ENCODE measurements at regions of chr15 and their contacts with region 1.

Region 1: GRCh38 chr15:29538044-29538443 is 268.4 kb upstream of the NSMCE3 start:
- DNase-seq: no peak
- H3K4me3 ChIP-seq: no peak overlapping the region
- CTCF ChIP-seq: no peak

Region 2: GRCh38 chr15:29242456-29243242 is 295.4 kb before region 1 on chr15:
- in situ Hi-C with region 1: loop called (anchors 25 kb)
- DNase-seq: no peak
- H3K4me3 ChIP-seq: no peak overlapping the region
- CTCF ChIP-seq: no peak

Region 3: DNA sequence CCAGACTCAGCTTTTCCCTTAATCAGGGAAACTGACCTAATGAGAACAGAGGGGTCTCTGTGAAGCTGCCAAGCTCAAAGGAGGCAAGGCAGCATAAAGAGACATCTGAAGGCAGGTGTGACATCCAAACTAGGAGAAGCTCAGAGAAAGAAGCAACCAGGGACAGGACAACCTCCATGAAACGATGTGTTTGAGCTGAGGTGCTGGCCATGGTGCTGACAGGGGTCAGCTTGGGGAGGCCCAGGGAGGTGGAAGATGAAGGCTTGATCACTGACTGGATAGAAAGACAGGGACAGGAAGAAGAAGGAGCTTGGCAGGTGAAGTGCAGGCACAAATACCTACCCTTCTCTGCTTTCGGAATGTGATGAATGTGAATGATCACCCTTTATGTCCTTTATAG is 88.9 kb before region 1 on chr15:
- in situ Hi-C with region 1: loop called (anchors 25 kb)
- DNase-seq: peak; percentile 12
- H3K4me3 ChIP-seq: no peak overlapping the region
- CTCF ChIP-seq: no peak

Region 4: GRCh38 chr15:29465196-29465595 is 72.8 kb before region 1 on chr15:
- in situ Hi-C with region 1: no loop called
- DNase-seq: no peak
- H3K4me3 ChIP-seq: no peak overlapping the region
- CTCF ChIP-seq: no peak

Region 5: DNA sequence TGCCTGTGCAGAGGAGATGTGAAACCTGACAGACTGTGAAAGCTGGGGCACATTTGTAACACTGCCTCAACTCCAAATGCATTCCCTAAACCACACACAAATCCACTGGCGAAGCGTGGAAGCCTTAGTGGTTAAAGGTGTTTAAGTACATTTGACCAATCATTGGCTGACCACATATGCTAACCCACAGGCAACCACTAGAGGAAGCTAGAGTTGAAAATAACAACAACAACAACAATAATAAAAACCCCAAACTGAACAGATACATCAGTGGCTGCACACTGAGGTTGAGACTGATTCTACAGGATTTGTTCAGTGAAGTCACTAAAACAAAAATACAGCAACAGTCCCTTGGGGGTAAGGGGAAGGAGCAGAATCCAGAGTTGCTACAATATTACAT is 154.5 kb after region 1 on chr15:
- in situ Hi-C with region 1: no loop called
- DNase-seq: no peak
- H3K4me3 ChIP-seq: no peak overlapping the region
- CTCF ChIP-seq: peak; percentile 31